HEK293T (cell line): ENCODE measurements at regions of chr3 and their contacts with region 1.

Region 1: DNA sequence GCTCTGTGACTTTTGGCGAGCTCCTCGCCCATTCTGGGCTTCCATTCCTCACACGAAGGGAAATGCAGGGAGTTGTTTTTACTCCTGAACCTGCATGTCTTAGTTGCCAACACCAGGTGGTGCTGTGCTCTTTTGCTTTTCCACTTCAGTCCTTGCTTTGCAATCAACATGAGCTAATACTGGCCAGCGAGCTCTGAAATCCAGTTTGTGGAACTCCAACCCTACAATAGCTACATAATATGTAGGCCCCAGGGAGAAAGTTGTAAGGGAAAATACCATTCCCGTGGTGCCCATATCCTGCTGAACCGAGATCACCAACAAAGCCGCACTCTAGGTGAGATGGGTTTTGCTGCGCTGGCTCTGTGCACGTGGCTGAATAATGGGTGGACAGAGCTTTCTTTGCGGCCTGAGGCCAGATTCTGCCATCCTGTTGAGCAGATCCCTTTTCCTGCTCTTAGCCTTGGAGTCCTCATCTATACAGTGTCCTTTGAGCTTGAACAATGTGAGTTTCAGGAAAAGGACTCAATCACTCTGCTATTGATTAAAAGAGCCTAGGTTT is 25.0 kb downstream of the LSM3 start:
- DNase-seq: peak; percentile 81

Region 2: GRCh38 chr3:14467814-14468620 is 264.4 kb after region 1 on chr3:
- CTCF ChIA-PET with region 1: interaction called, 12 read pairs
- POLR2A ChIA-PET with region 1: no interaction called
- DNase-seq: peak; percentile 85